ENCODE measurements at regions of chr1 and their contacts with region 1.

Region 1: GRCh38 chr1:16236511-16237342 is at the start of gene CPLANE2:
- DNase-seq: peak; percentile 81
- ATAC-seq: peak; percentile 82
- H3K4me3 ChIP-seq: peak within 1 kb of the TSS; percentile 70 to 83
- H3K27ac ChIP-seq: peak within 1 kb of the TSS; percentile 70
- H3K4me1 ChIP-seq: peaks cover 16 to 30% of the 10 kb centered on the region in 2 experiments
- H3K27me3 ChIP-seq: no peaks in the 10 kb centered on the region
- CTCF ChIP-seq: no peak
- POLR2A ChIP-seq: peak; percentile 79
- RAD21 ChIP-seq: no peak
- total RNA-seq, gene CPLANE2: 8.1 TPM

Region 2: GRCh38 chr1:16217061-16217785 is 19.5 kb before region 1 on chr1:
- CTCF ChIA-PET with region 1: interaction called, 5 read pairs
- POLR2A ChIA-PET with region 1: interaction called, 4 read pairs
- RAD21 ChIA-PET with region 1: no interaction called
- intact Hi-C with region 1: loop called (anchors 2 kb)
- DNase-seq: peak; percentile 96
- ATAC-seq: peak; percentile 93
- H3K4me3 ChIP-seq: peak overlapping the region; percentile 56 to 62
- H3K27ac ChIP-seq: peak overlapping the region; percentile 5; the same call in 1 of the 2 replicates
- H3K4me1 ChIP-seq: peaks cover 26 to 47% of the 10 kb centered on the region in 2 experiments
- H3K27me3 ChIP-seq: no peaks in the 10 kb centered on the region
- CTCF ChIP-seq: no peak
- POLR2A ChIP-seq: no peak
- RAD21 ChIP-seq: no peak